Esophagus squamous epithelium (tissue), 5 donors: ENCODE measurements at regions of chr3 and their contacts with region 1.

Region 1: DNA sequence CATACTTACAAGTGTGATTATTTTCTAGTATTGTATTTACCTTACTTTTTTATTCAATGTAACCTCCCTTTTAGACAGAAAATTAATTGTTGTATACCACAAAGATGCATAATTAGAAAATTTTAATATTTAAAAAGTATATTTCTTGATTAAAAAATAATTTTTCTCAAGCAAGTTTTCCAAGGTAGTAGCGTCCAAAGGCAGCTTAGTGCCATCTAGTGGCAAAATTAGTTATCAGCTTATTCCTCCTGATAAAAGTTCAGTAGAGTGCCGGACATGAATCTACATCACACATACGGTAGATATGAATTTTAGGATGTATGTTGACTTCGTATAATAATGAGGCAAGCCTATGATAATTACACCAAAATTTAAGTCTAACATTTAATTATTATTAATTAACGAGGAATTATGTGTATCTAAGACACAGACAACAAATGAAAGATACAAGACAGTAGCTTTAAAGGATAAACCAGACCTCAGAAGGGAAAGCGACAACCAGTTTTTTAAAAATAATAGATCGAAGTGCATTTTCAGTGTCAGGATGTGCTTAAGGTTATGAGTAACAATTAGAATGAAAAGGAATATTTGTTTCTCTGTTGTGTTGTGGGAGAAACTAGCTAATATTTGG is 405.9 kb downstream of the ROBO1 start:
- DNase-seq: no peak
- H3K4me3 ChIP-seq: no peak overlapping the region
- H3K27ac ChIP-seq: no peak overlapping the region
- H3K4me1 ChIP-seq: peaks cover 0 to 7% (median 0%) of the 10 kb centered on the region in 3 donors
- H3K27me3 ChIP-seq: no peaks in the 10 kb centered on the region
- CTCF ChIP-seq: peak in 5 of 6 experiments; percentile 16 to 72 (median 58)
- POLR2A ChIP-seq: no peak

Region 2: DNA sequence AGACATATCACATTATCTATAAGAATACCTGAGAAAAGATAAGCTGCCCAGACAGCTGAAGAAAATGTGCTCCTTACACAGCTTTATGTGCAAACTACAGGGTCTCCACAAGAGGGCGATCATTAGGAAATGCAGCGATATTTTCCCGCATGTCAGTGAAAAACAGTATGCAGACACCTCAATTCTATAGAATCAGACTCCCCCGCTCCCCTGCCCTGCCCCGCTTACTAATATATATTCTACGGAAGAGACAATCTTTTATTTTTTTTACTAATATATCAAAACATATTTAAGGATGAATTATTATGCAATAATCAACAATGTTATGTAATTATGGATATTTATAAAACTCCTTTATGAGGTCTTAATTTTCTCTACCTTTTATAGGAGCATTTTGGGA is 275.3 kb before region 1 on chr3:
- intact Hi-C with region 1: loop called (anchors 10 kb)
- DNase-seq: no peak
- H3K4me3 ChIP-seq: no peak overlapping the region
- H3K27ac ChIP-seq: no peak overlapping the region
- H3K4me1 ChIP-seq: peaks cover 0 to 11% (median 3%) of the 10 kb centered on the region in 3 donors
- H3K27me3 ChIP-seq: no peaks in the 10 kb centered on the region
- CTCF ChIP-seq: peak; percentile 19 to 79 (median 67)
- POLR2A ChIP-seq: no peak